ENCODE measurements at regions of chr12 and their contacts with region 1.

Region 1: GRCh38 chr12:89461649-89462612 is 62.7 kb downstream of the GALNT4 start:
- DNase-seq: no peak
- H3K4me3 ChIP-seq: peak overlapping the region in 1 of 4 donors; percentile 39
- H3K27ac ChIP-seq: peak overlapping the region in 2 of 4 donors; percentile 60 to 70
- H3K4me1 ChIP-seq: peaks cover 3 to 12% (median 3%) of the 10 kb centered on the region in 3 donors
- H3K27me3 ChIP-seq: no peaks in the 10 kb centered on the region
- CTCF ChIP-seq: peak; percentile 16 to 79 (median 61)
- POLR2A ChIP-seq: no peak

Region 2: DNA sequence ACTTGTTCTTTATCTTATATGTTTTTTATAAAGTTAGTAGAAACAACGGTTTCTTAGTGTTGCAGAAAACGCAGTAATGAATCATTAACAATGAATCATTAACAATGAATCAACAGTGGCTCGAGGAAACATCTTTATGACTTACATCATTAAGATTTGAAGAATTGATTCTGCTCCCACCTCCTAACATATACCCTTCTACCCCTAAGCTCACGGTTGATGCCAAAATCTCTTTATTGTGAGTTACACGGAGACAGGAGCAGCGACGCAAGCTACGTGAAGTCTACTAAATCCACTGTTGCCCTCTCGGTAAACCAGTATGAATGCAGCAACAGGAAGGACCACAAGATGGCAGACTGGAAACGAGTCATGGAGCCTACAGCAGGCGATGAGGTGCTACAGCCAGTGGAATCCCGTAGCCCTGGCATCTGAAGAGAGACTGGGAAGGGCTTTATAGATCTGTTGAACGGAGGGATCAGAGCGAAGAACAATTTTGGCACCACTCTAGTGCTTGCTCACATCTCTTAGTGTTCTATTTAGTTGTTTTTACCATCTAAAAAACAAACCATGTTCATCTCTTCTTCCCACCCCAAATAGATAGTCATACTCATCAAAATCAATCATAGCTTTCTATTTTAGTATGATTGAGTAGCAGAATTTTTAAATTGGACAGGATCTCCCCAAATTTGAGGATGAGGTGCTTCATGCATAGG is 442.4 kb before region 1 on chr12:
- intact Hi-C with region 1: loop called (anchors 10 kb)
- DNase-seq: peak; percentile 17
- H3K4me3 ChIP-seq: peak overlapping the region in 3 of 4 donors; percentile 18 to 55 (median 19)
- H3K27ac ChIP-seq: no peak overlapping the region
- H3K4me1 ChIP-seq: peaks cover 0 to 18% (median 2%) of the 10 kb centered on the region in 3 donors
- H3K27me3 ChIP-seq: no peaks in the 10 kb centered on the region
- CTCF ChIP-seq: peak; percentile 67 to 88 (median 81)
- POLR2A ChIP-seq: no peak

Region 3: GRCh38 chr12:89059721-89060541 is 402.0 kb before region 1 on chr12:
- intact Hi-C with region 1: loop called (anchors 5 kb)
- DNase-seq: no peak
- H3K4me3 ChIP-seq: no peak overlapping the region
- H3K27ac ChIP-seq: no peak overlapping the region
- H3K4me1 ChIP-seq: no peaks in the 10 kb centered on the region
- H3K27me3 ChIP-seq: no peaks in the 10 kb centered on the region
- CTCF ChIP-seq: no peak
- POLR2A ChIP-seq: no peak

Region 4: GRCh38 chr12:89661706-89662330 is 199.9 kb after region 1 on chr12:
- intact Hi-C with region 1: no loop called
- DNase-seq: no peak
- H3K4me3 ChIP-seq: no peak overlapping the region
- H3K27ac ChIP-seq: no peak overlapping the region
- H3K4me1 ChIP-seq: peaks cover 6 to 21% (median 10%) of the 10 kb centered on the region in 3 donors
- H3K27me3 ChIP-seq: no peaks in the 10 kb centered on the region
- CTCF ChIP-seq: no peak
- POLR2A ChIP-seq: no peak